GM12878 (cell line): ENCODE measurements at regions of chr22 and their contacts with region 1.

Region 1: DNA sequence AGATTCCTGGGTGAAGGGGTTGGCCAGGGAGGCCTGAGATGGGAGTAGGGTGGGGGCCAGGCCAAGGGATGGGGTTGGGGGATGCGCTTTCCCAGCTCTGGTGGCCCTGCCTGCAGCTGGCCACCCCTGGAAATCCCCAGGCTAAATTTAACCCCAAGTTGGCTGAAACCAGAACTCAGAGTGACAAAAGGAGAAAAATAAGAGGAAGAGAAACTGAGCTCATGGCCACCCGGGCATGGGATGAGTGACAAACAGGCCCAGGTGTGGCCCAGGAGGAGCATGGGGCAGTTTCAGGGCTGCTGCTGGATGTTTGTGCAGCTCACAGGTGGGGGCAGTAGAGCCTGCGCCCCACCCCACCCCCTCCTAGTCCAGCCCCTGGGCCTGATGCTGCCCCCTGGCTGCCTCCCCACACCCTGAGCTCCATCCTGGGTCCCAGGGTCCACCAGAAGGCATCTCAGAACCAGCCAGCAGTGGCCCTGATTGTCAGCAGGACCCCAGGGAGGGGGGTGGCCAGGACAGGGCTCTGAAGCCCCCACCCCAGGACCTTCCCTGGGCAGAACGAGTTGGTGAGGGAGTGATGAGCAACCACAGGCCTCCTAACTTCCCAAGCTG is 48.0 kb downstream of the IGLL5 start:
- DNase-seq: peak; percentile 99
- ATAC-seq: peak; percentile 84
- H3K4me3 ChIP-seq: peak overlapping the region; percentile 24; the same call in 1 of the 2 replicates
- H3K27ac ChIP-seq: peak overlapping the region; percentile 99
- H3K4me1 ChIP-seq: peaks cover 92% of the 10 kb centered on the region
- H3K27me3 ChIP-seq: no peaks in the 10 kb centered on the region
- CTCF ChIP-seq: peak; percentile 53 to 83 (median 71)
- EP300 ChIP-seq: peak; percentile 100
- POLR2A ChIP-seq: no peak; the same call in 1 of the 2 replicates
- RAD21 ChIP-seq: peak; percentile 75

Region 2: DNA sequence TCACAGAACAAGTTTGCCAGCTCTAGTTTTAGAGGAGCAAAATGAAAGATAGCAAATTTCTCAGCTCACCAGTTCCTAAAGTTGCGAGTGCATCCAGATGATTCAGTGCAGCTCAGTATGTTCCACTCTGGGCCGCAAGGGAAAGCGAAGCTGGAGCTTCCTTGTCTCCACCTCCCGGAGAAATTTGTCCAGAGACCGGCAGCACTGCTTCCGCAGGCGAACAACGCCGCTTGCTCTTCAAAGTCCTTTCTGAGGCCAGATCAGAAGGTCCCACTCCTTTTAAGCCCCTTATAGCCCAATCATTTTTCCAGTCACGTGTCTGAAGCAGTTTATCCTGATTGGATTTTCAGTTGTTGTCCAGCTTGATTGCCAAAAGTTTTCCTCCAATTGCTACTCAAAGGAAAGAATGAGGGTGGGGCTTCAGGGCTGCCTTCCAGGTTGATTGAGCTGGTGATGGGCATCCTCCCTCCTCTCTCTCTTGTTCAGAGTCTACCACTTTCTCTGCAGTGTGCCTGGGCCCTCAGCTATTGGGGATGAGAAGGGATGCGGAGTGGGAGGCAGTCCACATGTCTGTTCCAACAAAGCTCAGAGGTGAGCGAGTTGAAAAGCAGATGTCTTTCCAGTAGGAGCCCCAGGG is 415.5 kb before region 1 on chr22 and contains the start of gene ZNF280A:
- CTCF ChIA-PET with region 1: no interaction called
- POLR2A ChIA-PET with region 1: no interaction called
- RAD21 ChIA-PET with region 1: no interaction called
- SMC1A ChIA-PET with region 1: no interaction called
- in situ Hi-C with region 1: no loop called
- intact Hi-C with region 1: no loop called
- DNase-seq: no peak
- ATAC-seq: no peak
- H3K4me3 ChIP-seq: no peak within 1 kb of the TSS
- H3K27ac ChIP-seq: no peak within 1 kb of the TSS
- H3K4me1 ChIP-seq: no peaks in the 10 kb centered on the region
- H3K27me3 ChIP-seq: no peaks in the 10 kb centered on the region
- CTCF ChIP-seq: no peak
- EP300 ChIP-seq: no peak
- POLR2A ChIP-seq: no peak
- RAD21 ChIP-seq: no peak
- polyA plus RNA-seq, gene ZNF280A: not detected

Region 3: GRCh38 chr22:22818861-22819855 is 116.5 kb before region 1 on chr22:
- CTCF ChIA-PET with region 1: interaction called, 5 read pairs
- POLR2A ChIA-PET with region 1: no interaction called
- RAD21 ChIA-PET with region 1: interaction called, 14 read pairs
- SMC1A ChIA-PET with region 1: interaction called, 6 read pairs
- in situ Hi-C with region 1: no loop called
- intact Hi-C with region 1: no loop called
- DNase-seq: peak; percentile 47
- ATAC-seq: peak; percentile 89
- H3K4me3 ChIP-seq: no peak overlapping the region
- H3K27ac ChIP-seq: peak overlapping the region; percentile 55
- H3K4me1 ChIP-seq: peaks cover 28% of the 10 kb centered on the region
- H3K27me3 ChIP-seq: no peaks in the 10 kb centered on the region
- CTCF ChIP-seq: no peak
- EP300 ChIP-seq: no peak
- POLR2A ChIP-seq: no peak
- RAD21 ChIP-seq: no peak

Region 4: GRCh38 chr22:22948651-22949571 is 13.3 kb after region 1 on chr22:
- CTCF ChIA-PET with region 1: interaction called, 397 read pairs
- POLR2A ChIA-PET with region 1: interaction called, 36 read pairs
- RAD21 ChIA-PET with region 1: interaction called, 145 read pairs
- SMC1A ChIA-PET with region 1: interaction called, 93 read pairs
- in situ Hi-C with region 1: no loop called
- intact Hi-C with region 1: no loop called
- DNase-seq: no peak
- ATAC-seq: no peak
- H3K4me3 ChIP-seq: no peak overlapping the region
- H3K27ac ChIP-seq: no peak overlapping the region
- H3K4me1 ChIP-seq: peaks cover 34% of the 10 kb centered on the region
- H3K27me3 ChIP-seq: no peaks in the 10 kb centered on the region
- CTCF ChIP-seq: no peak
- EP300 ChIP-seq: no peak
- POLR2A ChIP-seq: no peak
- RAD21 ChIP-seq: no peak